ENCODE measurements at regions of chr17 and their contacts with region 1.

Region 1: DNA sequence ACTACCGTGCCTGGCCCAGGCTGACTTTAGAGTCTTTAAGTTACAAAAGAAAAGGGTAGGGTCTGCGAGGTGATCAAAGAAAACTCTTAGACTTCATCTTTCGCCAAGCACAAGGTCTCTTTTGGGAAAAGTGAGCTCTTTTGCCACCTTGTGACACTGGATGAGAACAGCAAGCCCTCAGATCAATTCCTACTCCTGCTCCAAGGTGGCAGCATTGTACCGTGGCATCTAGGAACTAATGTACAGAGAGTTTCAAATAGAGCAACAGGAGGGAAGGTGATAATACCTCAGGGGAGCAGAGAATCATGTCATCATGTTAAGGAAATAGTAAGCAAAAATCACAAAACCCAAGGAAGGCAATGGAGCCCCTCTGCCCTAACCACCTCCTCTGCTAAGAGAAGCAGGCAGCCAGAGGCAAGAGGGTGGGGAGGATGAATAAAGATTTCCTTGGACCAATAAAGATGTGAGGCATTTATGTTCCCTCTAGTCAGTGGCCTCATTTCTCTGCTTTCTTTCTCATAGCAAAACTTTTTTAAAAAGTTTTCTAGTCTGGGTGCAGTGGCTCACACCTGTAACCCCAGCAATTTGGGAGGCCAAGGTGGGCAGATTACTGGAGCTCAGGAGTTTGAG is 2.1 kb upstream of the C17orf78 start:
- DNase-seq: peak; percentile 82 to 91
- ATAC-seq: peak; percentile 98 to 99
- H3K4me3 ChIP-seq: no peak overlapping the region
- H3K27ac ChIP-seq: peak overlapping the region in 1 of 2 experiments; percentile 54; a peak in 3 of 6 replicates
- H3K4me1 ChIP-seq: peaks cover 2% of the 10 kb centered on the region; the same call in 1 of the 3 replicates
- CTCF ChIP-seq: peak; percentile 100
- EP300 ChIP-seq: no peak
- POLR2A ChIP-seq: no peak
- RAD21 ChIP-seq: peak; percentile 99 to 100

Region 2: DNA sequence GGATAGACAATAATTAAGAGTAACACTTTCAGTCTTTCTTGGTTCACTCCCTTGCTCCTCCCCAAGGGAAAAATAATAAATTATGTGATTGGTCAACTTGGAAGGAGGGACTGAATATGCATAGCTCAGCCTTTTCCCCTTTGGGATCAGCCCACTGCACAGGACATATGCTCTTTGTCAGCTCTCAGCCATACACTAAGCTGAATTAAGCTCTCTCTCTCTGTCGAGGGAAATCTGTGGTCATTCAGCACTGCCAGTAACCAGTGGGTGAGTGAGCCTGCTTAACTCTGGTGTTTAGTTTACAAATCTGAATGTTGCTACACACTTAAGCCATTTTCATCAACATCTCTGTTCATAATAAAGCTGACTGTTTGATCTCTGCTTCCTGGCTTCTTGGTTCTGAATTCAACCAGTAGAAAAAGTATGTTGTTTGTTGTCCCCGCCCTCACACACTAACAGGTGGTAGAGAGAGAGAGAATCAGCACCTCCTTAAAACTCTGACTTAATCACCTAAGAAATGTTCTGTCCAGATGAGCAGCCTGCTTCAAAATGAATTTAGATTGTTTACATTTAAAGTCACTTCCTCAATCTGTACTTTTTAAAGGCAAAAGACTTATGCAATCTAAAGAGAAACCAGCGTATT is 100.1 kb before region 1 on chr17:
- CTCF ChIA-PET with region 1: interaction called, 17 read pairs
- POLR2A ChIA-PET with region 1: no interaction called
- DNase-seq: peak in 1 of 2 experiments; percentile 15
- ATAC-seq: peak; percentile 30 to 63; a peak in 3 of 6 replicates
- H3K4me3 ChIP-seq: no peak overlapping the region
- H3K27ac ChIP-seq: no peak overlapping the region
- H3K4me1 ChIP-seq: peaks cover 26% of the 10 kb centered on the region
- CTCF ChIP-seq: no peak
- EP300 ChIP-seq: no peak
- POLR2A ChIP-seq: no peak
- RAD21 ChIP-seq: no peak

Region 3: DNA sequence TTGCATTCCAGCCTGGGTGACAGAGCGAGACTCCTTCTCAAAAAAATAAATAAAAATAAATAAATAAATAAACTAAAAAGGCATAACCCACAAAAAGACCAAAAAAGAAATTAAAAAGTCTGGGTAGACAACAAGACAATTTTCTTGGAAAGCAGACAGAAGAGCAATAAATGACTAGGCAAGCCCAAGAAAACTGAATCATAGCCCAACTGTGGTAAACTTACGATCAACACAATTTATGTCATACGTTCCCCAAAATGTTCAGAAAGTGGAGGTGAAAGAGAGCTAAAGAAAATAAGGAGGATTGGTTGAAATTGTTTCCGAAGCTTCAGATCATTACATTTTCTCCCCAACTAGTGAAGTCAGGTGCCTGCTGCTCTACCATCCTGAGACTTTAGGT is 29.1 kb before region 1 on chr17:
- CTCF ChIA-PET with region 1: interaction called, 25 read pairs
- POLR2A ChIA-PET with region 1: no interaction called
- DNase-seq: no peak
- ATAC-seq: no peak
- H3K4me3 ChIP-seq: no peak overlapping the region
- H3K27ac ChIP-seq: no peak overlapping the region
- H3K4me1 ChIP-seq: peaks cover 9% of the 10 kb centered on the region
- CTCF ChIP-seq: no peak
- EP300 ChIP-seq: no peak
- POLR2A ChIP-seq: no peak
- RAD21 ChIP-seq: no peak

Region 4: GRCh38 chr17:37392024-37392590 is 18.5 kb after region 1 on chr17:
- CTCF ChIA-PET with region 1: interaction called, 204 read pairs
- POLR2A ChIA-PET with region 1: no interaction called
- DNase-seq: peak in 1 of 2 experiments; percentile 34
- ATAC-seq: peak; percentile 72
- H3K4me3 ChIP-seq: no peak overlapping the region
- H3K27ac ChIP-seq: no peak overlapping the region; a peak in 1 of 6 replicates
- H3K4me1 ChIP-seq: peaks cover 25% of the 10 kb centered on the region
- CTCF ChIP-seq: no peak
- EP300 ChIP-seq: no peak
- POLR2A ChIP-seq: no peak
- RAD21 ChIP-seq: no peak

Region 5: GRCh38 chr17:37406635-37407461 is 33.2 kb after region 1 on chr17 and contains the starts of genes ACACA and TADA2A:
- CTCF ChIA-PET with region 1: interaction called, 33 read pairs
- POLR2A ChIA-PET with region 1: interaction called, 9 read pairs
- DNase-seq: peak; percentile 89 to 93
- ATAC-seq: peak; percentile 96 to 97
- H3K4me3 ChIP-seq: peak within 1 kb of the TSS; percentile 76
- H3K27ac ChIP-seq: peak within 1 kb of the TSS; percentile 91 to 98
- H3K4me1 ChIP-seq: peaks cover 16% of the 10 kb centered on the region; the same call in 2 of the 3 replicates
- CTCF ChIP-seq: no peak
- EP300 ChIP-seq: no peak
- POLR2A ChIP-seq: peak; percentile 90
- RAD21 ChIP-seq: 0 out of 5 replicates have a peak, but pooled peaks of 1 of the 2 experiments have one; percentile 10
- polyA plus RNA-seq, gene ACACA: 112 and 113 TPM in 2 replicates
- polyA plus RNA-seq, gene TADA2A: 22.2 and 27.1 TPM in 2 replicates

Region 6: DNA sequence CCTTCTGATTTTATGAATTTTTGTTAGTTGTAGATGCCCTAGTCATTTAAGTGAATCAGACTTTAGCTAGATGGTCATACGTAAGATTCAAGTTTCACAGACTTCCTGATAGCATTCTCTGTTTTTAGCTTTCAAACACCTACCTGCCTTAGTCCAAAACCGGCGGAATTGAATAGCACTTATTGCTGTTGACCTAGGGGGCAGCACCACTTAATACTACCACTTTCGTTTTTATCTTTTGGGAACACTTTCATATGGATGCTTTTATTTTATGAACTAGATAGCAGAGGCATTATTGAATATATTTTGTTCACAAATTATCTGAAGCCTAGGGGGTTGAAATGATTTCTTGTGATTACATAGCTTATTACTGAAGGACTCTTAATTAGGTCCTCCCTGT is 64.5 kb after region 1 on chr17:
- CTCF ChIA-PET with region 1: interaction called, 27 read pairs
- POLR2A ChIA-PET with region 1: no interaction called
- DNase-seq: peak in 1 of 2 experiments; percentile 26
- ATAC-seq: peak; percentile 48 to 59; a peak in 2 of 6 replicates
- H3K4me3 ChIP-seq: no peak overlapping the region
- H3K27ac ChIP-seq: no peak overlapping the region
- H3K4me1 ChIP-seq: no peaks in the 10 kb centered on the region
- CTCF ChIP-seq: peak; percentile 55
- EP300 ChIP-seq: no peak
- POLR2A ChIP-seq: no peak
- RAD21 ChIP-seq: peak in 1 of 2 experiments; percentile 26; a peak in 2 of 5 replicates

Region 7: DNA sequence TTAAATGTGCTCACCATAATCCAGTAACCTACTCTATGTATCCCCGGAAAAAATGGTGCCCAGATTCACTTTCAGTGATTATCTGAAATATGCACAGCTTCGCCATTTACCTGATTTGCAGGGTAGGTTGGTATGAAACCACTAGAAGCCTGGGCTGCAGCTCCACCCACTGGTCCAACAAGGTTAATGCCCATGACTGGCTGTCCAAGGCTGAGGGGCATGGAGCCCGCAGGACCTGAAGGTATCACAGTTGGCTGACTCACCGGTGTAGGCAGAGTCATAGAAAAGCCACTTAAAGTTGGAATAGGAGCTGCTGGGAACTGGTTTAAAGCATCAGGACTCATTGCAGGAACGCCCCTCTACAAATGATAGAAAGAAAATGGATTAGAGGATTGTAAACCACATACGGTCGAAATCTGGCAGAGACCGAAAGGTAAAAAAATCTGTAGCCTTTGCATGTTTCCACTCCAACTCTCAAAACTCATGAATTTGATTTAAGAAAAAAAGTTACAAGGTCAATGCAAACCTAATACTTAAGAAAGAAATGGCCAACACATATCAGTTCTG is 197.0 kb after region 1 on chr17:
- CTCF ChIA-PET with region 1: interaction called, 18 read pairs
- POLR2A ChIA-PET with region 1: no interaction called
- DNase-seq: peak; percentile 81 to 87
- ATAC-seq: peak; percentile 100
- H3K4me3 ChIP-seq: no peak overlapping the region
- H3K27ac ChIP-seq: no peak overlapping the region
- H3K4me1 ChIP-seq: peaks cover 4% of the 10 kb centered on the region; the same call in 1 of the 3 replicates
- CTCF ChIP-seq: peak; percentile 68
- EP300 ChIP-seq: no peak
- POLR2A ChIP-seq: no peak
- RAD21 ChIP-seq: peak; percentile 66 to 82